BJ (cell line): ENCODE measurements at regions of chr15 and their contacts with region 1.

Region 1: GRCh38 chr15:52227456-52227855 is 36.3 kb upstream of the GNB5 start:
- DNase-seq: peak; percentile 39
- H3K4me3 ChIP-seq: no peak overlapping the region
- H3K27me3 ChIP-seq: peaks cover 2% of the 10 kb centered on the region
- CTCF ChIP-seq: peak; percentile 88

Region 2: DNA sequence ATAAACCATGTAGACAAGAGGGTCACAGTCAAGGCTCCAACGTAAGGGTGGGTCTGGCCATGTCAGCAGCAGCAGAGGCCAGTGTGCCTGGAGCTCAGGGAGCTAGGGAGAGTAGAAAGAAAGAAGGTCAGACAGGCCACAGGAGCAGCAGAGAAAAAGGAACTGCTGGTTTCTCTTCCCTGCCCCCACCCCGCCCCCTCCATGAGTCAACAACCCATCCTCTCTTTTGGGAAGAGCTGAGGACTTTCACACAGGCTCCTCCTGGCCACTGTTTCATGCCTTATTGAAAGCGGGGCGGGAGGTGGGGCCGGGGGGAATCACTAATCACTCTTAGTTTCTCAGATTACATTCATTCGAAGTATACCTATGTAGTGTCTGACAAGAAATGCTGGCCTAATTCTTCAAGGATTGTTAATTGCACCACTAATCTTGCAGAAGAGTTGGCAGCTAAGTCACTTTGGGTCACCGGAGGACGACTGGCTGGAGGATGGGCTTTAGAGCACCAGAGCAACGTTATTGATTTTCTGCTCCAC is 555.2 kb before region 1 on chr15:
- CTCF ChIA-PET with region 1: no interaction called
- POLR2A ChIA-PET with region 1: no interaction called
- DNase-seq: no peak
- H3K4me3 ChIP-seq: no peak overlapping the region
- H3K27me3 ChIP-seq: peaks cover 5% of the 10 kb centered on the region
- CTCF ChIP-seq: no peak

Region 3: DNA sequence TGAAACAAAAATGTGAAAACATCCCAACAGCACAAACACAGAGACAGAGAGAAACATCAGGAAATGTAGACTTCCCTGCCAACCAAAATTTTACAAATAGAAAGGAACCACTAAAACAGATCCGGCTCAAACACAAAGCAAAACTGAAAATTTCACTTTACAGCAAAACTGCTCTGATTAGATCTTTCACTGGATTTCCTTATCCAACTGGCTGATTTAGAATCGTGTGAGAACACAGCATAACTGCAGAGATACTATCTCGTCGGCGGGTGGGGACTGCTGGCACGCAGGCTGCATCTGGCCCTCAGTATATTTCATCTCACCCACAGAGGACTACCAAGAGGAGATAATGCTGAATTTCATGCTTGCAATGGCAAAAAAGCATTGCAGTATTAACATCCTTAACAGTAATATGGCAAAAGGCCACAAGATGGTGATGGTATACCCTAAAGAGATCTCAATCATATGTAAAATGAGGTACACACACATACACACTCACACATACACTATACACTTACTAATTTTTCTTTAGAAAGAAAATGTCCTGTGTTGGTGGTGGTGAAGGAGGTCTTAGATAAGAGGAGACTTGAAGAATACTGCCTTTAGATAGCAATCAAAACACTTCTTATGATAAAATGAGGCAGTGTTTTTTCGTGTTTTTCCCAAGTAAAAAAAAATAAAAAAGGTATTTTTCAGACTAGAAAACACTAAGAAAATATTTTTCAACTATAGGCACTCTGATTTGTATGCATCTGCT is 245.3 kb before region 1 on chr15:
- CTCF ChIA-PET with region 1: interaction called, 11 read pairs
- POLR2A ChIA-PET with region 1: interaction called, 3 read pairs
- DNase-seq: peak; percentile 50
- H3K4me3 ChIP-seq: peak overlapping the region; percentile 20; the same call in 1 of the 2 replicates
- H3K27me3 ChIP-seq: no peaks in the 10 kb centered on the region
- CTCF ChIP-seq: peak; percentile 52

Region 4: GRCh38 chr15:52179278-52180195 is 47.9 kb before region 1 on chr15:
- CTCF ChIA-PET with region 1: interaction called, 14 read pairs
- POLR2A ChIA-PET with region 1: no interaction called
- DNase-seq: no peak
- H3K4me3 ChIP-seq: peak overlapping the region; percentile 82
- H3K27me3 ChIP-seq: no peaks in the 10 kb centered on the region
- CTCF ChIP-seq: no peak

Region 5: GRCh38 chr15:52193791-52194190 is 33.7 kb before region 1 on chr15:
- CTCF ChIA-PET with region 1: interaction called, 20 read pairs
- POLR2A ChIA-PET with region 1: no interaction called
- DNase-seq: no peak
- H3K4me3 ChIP-seq: no peak overlapping the region
- H3K27me3 ChIP-seq: peaks cover 2% of the 10 kb centered on the region; the same call in 1 of the 2 replicates
- CTCF ChIP-seq: no peak

Region 6: DNA sequence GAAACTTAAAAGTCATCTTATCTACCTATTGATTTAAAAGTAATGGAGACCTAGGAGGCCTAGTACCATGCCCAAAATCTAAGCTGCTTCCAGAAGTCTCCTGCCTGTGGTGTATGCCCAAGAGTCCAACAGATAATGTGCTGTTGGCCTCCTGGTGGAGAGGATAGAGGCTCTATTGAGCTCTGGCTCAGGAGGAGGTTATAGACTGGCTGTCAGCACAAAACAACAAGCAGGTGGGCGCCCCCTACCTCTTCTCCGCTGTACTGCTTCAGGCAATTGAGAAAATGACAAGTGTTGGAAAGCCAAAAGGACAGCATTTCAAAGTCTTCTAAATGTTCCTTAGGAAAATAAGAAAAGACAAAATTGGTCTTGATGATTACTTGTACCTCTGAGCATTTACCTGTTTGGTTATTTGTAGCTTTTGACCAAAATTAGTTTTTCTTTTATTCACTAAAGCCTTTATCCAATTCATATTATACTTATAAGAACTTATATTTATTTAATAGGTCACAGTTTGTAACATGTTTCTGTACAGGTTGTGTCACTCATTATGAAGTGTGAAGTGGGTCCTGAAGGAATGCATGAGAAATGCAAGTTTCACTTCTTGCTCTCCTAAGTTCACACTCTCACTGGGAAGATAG is 19.0 kb before region 1 on chr15:
- CTCF ChIA-PET with region 1: interaction called, 51 read pairs
- POLR2A ChIA-PET with region 1: no interaction called
- DNase-seq: no peak
- H3K4me3 ChIP-seq: no peak overlapping the region
- H3K27me3 ChIP-seq: no peaks in the 10 kb centered on the region
- CTCF ChIP-seq: peak; percentile 82

Region 7: DNA sequence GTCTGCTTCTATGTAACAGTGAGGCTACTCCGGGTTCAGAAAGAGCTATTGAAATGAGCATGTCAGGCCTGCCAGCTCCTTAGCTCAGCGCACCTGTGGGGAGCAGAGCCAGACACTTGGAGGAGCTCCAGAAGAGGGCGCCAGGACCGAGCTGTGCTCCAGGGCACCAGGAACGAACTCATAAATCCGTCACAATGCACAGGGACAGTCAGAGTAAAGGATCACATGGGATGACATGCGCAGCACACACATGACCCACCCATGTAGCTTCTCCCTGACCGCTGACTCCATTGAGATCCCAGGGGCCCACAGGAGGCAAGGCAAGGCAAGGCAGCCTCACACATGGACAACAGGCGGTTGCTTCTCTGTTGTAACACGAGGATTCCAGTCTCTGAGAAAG is 10.3 kb before region 1 on chr15:
- CTCF ChIA-PET with region 1: interaction called, 51 read pairs
- POLR2A ChIA-PET with region 1: no interaction called
- DNase-seq: no peak
- H3K4me3 ChIP-seq: no peak overlapping the region
- H3K27me3 ChIP-seq: peaks cover 2% of the 10 kb centered on the region; the same call in 1 of the 2 replicates
- CTCF ChIP-seq: no peak